GM12878 (cell line): ENCODE measurements at regions of chr4 and their contacts with region 1.

Region 1: DNA sequence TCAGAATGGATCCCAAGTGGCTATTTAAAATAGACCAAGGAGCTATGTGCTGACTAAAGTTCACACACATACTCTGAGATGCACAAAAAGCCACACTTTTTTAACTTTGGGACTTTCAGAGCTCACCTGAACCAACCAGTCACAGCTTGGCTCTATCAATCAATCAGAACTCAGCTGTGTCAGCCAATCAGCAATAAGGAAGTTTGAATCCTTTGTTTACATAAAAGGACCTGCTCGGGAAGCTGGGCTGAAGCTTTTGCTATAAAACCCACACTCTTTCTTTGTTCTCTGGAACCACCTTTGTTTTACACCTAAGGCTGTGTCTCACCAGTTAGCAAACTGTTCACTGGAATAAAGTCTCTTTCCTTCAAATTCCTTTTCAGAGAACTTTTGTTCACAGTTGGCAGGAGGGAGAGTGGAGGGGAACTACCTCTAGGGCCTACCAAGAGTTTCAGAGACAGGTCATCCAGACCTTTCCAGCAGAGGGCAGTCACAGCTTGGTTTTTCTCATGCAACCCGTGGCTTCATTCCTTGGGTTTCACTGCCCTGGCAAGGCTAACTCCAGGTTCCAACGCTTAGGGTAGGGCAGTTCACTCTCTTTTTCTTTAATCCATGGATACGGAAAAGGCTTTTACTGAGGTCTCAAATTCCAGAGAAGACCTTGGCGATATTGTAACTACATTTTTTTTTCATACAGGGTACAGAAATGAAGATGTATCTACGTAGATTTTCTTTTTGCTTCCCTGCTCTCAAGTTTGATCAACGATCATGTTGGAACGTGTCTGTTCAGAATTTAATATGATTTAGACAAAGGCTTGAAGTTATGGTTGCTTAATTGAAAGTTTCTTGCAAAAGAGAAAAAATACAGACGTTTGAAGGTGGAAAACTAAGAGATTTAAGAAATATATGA is 80.7 kb downstream of the GPRIN3 start:
- DNase-seq: peak; percentile 4
- ATAC-seq: peak; percentile 92
- H3K4me3 ChIP-seq: no peak overlapping the region
- H3K27ac ChIP-seq: no peak overlapping the region
- H3K4me1 ChIP-seq: no peaks in the 10 kb centered on the region
- H3K27me3 ChIP-seq: no peaks in the 10 kb centered on the region; a peak in 1 of 4 replicates
- CTCF ChIP-seq: peak; percentile 69 to 77 (median 71)
- EP300 ChIP-seq: no peak
- POLR2A ChIP-seq: no peak
- RAD21 ChIP-seq: peak; percentile 68

Region 2: DNA sequence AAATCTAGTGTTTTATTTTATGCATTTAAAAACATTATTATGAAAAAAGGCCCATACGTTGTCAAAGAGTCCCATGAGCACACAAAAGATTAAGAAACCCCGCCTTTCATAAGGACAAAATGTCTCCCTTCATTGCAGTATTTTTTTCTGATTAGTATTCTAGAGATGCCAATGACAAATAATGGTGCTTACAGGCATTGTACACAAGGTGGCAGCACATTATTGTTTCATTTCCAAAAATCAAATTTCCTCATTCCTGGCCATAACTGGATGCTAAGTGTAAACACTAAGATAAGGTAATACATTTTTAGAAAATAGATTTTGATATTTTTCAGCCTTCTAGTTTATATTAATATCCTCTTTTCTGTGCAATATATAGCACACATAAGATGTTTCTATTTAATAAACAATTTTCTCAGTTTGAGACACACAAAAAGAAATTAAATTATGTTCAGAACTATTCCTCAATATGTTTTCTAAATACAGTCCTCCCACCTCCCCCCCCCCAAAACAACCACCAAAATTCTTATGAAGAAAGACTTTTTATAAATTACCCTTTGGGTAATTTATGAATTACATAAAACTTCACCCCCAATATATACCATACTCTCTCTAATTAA is 67.9 kb before region 1 on chr4:
- CTCF ChIA-PET with region 1: interaction called, 28 read pairs
- POLR2A ChIA-PET with region 1: no interaction called
- RAD21 ChIA-PET with region 1: interaction called, 10 read pairs
- SMC1A ChIA-PET with region 1: interaction called, 20 read pairs
- in situ Hi-C with region 1: no loop called
- intact Hi-C with region 1: no loop called
- DNase-seq: no peak
- ATAC-seq: peak; percentile 81
- H3K4me3 ChIP-seq: no peak overlapping the region
- H3K27ac ChIP-seq: no peak overlapping the region
- H3K4me1 ChIP-seq: no peaks in the 10 kb centered on the region
- H3K27me3 ChIP-seq: no peaks in the 10 kb centered on the region; a peak in 1 of 4 replicates
- CTCF ChIP-seq: peak; percentile 62 to 71 (median 70); a peak in 5 of 6 replicates
- EP300 ChIP-seq: no peak
- POLR2A ChIP-seq: no peak
- RAD21 ChIP-seq: peak; percentile 59

Region 3: DNA sequence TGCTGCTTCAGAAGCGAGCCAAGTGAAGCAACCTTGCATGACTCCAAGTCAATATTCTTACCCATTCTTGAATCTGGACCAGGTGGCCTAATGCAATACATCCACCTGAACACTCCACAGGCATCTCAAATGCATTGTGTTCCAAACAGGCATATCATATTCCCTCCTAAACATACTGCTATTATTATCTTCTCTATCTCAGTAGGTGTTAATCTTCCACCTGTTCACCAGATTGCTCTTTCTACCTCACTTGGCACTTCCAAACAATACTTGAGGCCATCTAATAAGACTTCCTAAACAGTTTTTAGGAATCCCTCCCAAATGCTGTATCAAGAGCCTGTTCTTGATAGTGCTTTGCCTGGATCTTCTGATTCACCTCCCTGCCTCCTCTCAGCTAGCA is 10.1 kb before region 1 on chr4:
- CTCF ChIA-PET with region 1: interaction called, 11 read pairs
- POLR2A ChIA-PET with region 1: no interaction called
- RAD21 ChIA-PET with region 1: interaction called, 5 read pairs
- SMC1A ChIA-PET with region 1: interaction called, 4 read pairs
- in situ Hi-C with region 1: no loop called
- intact Hi-C with region 1: no loop called
- DNase-seq: no peak
- ATAC-seq: no peak
- H3K4me3 ChIP-seq: no peak overlapping the region
- H3K27ac ChIP-seq: no peak overlapping the region
- H3K4me1 ChIP-seq: no peaks in the 10 kb centered on the region
- H3K27me3 ChIP-seq: no peaks in the 10 kb centered on the region; a peak in 1 of 4 replicates
- CTCF ChIP-seq: no peak
- EP300 ChIP-seq: no peak
- POLR2A ChIP-seq: no peak
- RAD21 ChIP-seq: no peak

Region 4: GRCh38 chr4:89254847-89255246 is 27.9 kb after region 1 on chr4:
- CTCF ChIA-PET with region 1: interaction called, 23 read pairs
- POLR2A ChIA-PET with region 1: no interaction called
- RAD21 ChIA-PET with region 1: interaction called, 4 read pairs
- SMC1A ChIA-PET with region 1: interaction called, 7 read pairs
- in situ Hi-C with region 1: no loop called
- intact Hi-C with region 1: loop called (anchors 1 kb)
- DNase-seq: no peak
- ATAC-seq: peak; percentile 76
- H3K4me3 ChIP-seq: no peak overlapping the region
- H3K27ac ChIP-seq: no peak overlapping the region
- H3K4me1 ChIP-seq: no peaks in the 10 kb centered on the region
- H3K27me3 ChIP-seq: no peaks in the 10 kb centered on the region; a peak in 1 of 4 replicates
- CTCF ChIP-seq: peak; percentile 66 to 75 (median 72)
- EP300 ChIP-seq: no peak
- POLR2A ChIP-seq: no peak
- RAD21 ChIP-seq: peak; percentile 57

Region 5: GRCh38 chr4:90025248-90025647 is 798.3 kb after region 1 on chr4:
- CTCF ChIA-PET with region 1: no interaction called
- POLR2A ChIA-PET with region 1: interaction called, 12 read pairs
- RAD21 ChIA-PET with region 1: no interaction called
- SMC1A ChIA-PET with region 1: no interaction called
- in situ Hi-C with region 1: no loop called
- intact Hi-C with region 1: no loop called
- DNase-seq: no peak
- ATAC-seq: no peak
- H3K4me3 ChIP-seq: no peak overlapping the region
- H3K27ac ChIP-seq: no peak overlapping the region
- H3K4me1 ChIP-seq: peaks cover 9% of the 10 kb centered on the region
- H3K27me3 ChIP-seq: no peaks in the 10 kb centered on the region
- CTCF ChIP-seq: peak in 2 of 3 experiments; percentile 19 to 20; a peak in 3 of 6 replicates
- EP300 ChIP-seq: no peak
- POLR2A ChIP-seq: no peak
- RAD21 ChIP-seq: peak; percentile 46